ENCODE measurements at regions of chr18 and their contacts with region 1.

Region 1: GRCh38 chr18:5456577-5457463 is 87.0 kb downstream of the EPB41L3 start:
- DNase-seq: peak; percentile 16
- H3K4me3 ChIP-seq: peak overlapping the region; percentile 11; the same call in 1 of the 2 replicates
- H3K27me3 ChIP-seq: no peaks in the 10 kb centered on the region
- CTCF ChIP-seq: peak; percentile 41; the same call in 1 of the 2 replicates

Region 2: DNA sequence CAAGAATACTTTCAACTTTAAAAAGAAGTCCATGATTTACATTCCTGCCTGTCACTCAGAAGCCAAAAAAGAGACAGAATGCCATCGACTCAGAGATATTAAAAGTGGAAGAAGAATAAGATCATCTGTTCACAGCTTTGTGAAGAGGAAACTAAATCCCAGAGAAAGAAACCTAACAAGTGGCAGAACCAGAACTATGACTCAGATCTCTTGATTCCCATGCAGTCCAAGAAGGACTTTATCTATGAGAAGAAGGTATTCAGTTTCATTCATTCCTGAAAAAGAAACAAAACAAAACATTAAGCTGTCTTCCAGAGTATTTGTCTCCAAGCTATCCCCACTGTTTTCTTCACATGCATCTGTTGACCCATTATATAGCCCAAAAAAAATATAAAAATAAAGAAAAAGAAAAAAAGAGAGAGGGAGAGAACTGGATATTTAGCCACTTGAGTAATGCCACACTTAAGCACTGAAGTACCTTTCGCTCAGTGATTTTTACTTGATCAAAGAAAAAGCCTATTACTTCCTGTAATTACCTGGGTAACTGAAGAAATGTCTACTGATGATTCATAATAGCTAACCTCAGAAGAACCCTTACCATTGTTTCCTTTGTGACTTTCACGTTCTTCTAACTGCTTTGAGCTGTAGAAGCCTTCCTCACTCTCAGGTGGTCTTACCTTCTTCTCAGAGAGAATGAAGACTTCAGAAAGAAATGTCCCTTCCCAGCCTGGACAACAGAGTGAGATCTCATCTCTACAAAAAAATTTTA is 242.1 kb before region 1 on chr18:
- CTCF ChIA-PET with region 1: no interaction called
- POLR2A ChIA-PET with region 1: no interaction called
- DNase-seq: no peak
- H3K4me3 ChIP-seq: no peak overlapping the region
- H3K27me3 ChIP-seq: no peaks in the 10 kb centered on the region
- CTCF ChIP-seq: no peak

Region 3: GRCh38 chr18:5546660-5547059 is 89.8 kb after region 1 on chr18:
- CTCF ChIA-PET with region 1: interaction called, 10 read pairs
- POLR2A ChIA-PET with region 1: no interaction called
- DNase-seq: no peak
- H3K4me3 ChIP-seq: no peak overlapping the region
- H3K27me3 ChIP-seq: no peaks in the 10 kb centered on the region
- CTCF ChIP-seq: peak; percentile 73